ENCODE measurements at regions of chr11 and their contacts with region 1.

Region 1: DNA sequence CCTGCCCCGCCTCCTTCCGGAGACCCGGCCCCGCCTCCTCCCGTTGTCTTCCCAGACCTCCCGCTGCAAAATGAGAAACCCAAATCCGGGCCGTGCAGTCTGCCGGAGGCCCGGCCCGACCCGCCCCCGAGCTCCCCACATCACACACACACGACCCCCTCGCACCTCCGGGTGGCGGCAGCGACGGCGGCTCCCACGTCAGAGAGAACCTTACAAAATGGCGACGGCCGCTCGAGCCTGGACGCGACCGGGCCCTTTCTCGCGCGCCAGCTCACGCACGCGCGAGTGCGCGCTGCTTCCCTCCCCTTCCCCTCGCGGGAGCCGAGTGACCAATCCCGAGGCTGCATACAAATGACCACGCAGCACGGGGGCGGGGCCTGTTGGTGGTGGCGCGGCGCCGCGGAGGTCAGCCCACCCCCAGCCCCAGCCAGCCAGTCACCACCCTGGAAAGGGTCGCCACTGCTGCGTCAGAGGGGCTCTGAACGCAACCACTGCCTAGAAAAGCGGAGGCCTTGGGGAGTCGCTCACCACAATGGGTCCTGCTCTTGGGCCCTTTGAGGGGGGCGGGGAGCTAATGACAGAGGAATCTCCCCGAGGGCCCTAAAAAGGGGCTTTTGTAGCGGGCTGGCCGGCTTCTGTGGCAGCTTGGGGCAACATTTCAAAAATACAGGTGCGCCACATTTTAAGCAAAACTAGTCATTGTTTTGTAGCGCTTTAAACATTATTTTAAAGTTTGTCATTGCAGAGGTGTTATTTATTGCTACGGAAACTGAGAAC is at the start of gene RBM4B:
- DNase-seq: peak; percentile 99
- H3K4me3 ChIP-seq: peak within 1 kb of the TSS; percentile 70 to 92 (median 78)
- H3K27ac ChIP-seq: peak within 1 kb of the TSS; percentile 87 to 98 (median 92)
- H3K4me1 ChIP-seq: peaks cover 28 to 53% (median 45%) of the 10 kb centered on the region in 4 donors
- H3K27me3 ChIP-seq: no peaks in the 10 kb centered on the region
- CTCF ChIP-seq: no peak
- EP300 ChIP-seq: no peak
- POLR2A ChIP-seq: peak; percentile 48
- total RNA-seq, gene RBM4B: 10.3 to 13.2 (median 12.2) TPM

Region 2: GRCh38 chr11:66080055-66080817 is 597.6 kb before region 1 on chr11:
- intact Hi-C with region 1: no loop called
- DNase-seq: no peak
- H3K4me3 ChIP-seq: no peak overlapping the region
- H3K27ac ChIP-seq: peak overlapping the region; percentile 40 to 58 (median 48)
- H3K4me1 ChIP-seq: peaks cover 52 to 71% (median 58%) of the 10 kb centered on the region in 4 donors
- H3K27me3 ChIP-seq: no peaks in the 10 kb centered on the region
- CTCF ChIP-seq: no peak
- EP300 ChIP-seq: no peak
- POLR2A ChIP-seq: no peak

Region 3: GRCh38 chr11:66407651-66408050 is 270.1 kb before region 1 on chr11:
- intact Hi-C with region 1: no loop called
- DNase-seq: no peak
- H3K4me3 ChIP-seq: no peak overlapping the region
- H3K27ac ChIP-seq: no peak overlapping the region
- H3K4me1 ChIP-seq: peaks cover 6 to 46% (median 41%) of the 10 kb centered on the region in 4 donors
- H3K27me3 ChIP-seq: peaks cover 0 to 6% (median 0%) of the 10 kb centered on the region in 4 donors
- CTCF ChIP-seq: no peak
- EP300 ChIP-seq: no peak
- POLR2A ChIP-seq: no peak

Region 4: DNA sequence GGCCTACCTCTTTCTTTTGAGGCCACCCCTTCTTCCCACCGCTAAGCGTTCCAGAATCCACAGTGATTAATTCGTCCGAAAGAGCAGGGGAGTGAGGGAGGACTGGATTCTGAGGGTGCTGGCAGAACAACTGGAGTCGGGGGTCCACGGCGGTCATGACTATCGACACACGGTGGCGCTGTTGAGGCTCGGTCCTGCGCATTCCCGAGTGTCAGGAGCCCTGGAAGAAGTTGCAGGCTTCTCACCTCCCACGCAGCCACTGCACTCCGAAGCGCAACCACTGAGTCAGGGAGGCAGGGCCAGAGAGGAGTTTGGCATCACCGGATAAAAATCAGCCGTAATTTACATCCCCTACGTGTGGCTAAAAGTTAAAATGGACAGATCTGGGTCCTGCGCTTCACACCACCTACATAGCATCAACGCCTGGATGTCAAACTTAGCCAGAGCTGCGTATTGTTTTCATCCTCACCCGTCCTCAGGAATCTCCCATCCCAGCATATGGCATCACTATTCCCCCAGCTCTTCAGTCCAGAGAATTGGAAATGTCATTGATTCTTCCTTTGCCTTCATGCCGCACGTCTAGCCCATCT is 98.7 kb before region 1 on chr11:
- intact Hi-C with region 1: loop called (anchors 1 kb)
- DNase-seq: peak; percentile 95
- H3K4me3 ChIP-seq: no peak overlapping the region
- H3K27ac ChIP-seq: no peak overlapping the region
- H3K4me1 ChIP-seq: peaks cover 0 to 7% (median 6%) of the 10 kb centered on the region in 4 donors
- H3K27me3 ChIP-seq: no peaks in the 10 kb centered on the region
- CTCF ChIP-seq: peak; percentile 85 to 87 (median 86)
- EP300 ChIP-seq: no peak
- POLR2A ChIP-seq: no peak

Region 5: DNA sequence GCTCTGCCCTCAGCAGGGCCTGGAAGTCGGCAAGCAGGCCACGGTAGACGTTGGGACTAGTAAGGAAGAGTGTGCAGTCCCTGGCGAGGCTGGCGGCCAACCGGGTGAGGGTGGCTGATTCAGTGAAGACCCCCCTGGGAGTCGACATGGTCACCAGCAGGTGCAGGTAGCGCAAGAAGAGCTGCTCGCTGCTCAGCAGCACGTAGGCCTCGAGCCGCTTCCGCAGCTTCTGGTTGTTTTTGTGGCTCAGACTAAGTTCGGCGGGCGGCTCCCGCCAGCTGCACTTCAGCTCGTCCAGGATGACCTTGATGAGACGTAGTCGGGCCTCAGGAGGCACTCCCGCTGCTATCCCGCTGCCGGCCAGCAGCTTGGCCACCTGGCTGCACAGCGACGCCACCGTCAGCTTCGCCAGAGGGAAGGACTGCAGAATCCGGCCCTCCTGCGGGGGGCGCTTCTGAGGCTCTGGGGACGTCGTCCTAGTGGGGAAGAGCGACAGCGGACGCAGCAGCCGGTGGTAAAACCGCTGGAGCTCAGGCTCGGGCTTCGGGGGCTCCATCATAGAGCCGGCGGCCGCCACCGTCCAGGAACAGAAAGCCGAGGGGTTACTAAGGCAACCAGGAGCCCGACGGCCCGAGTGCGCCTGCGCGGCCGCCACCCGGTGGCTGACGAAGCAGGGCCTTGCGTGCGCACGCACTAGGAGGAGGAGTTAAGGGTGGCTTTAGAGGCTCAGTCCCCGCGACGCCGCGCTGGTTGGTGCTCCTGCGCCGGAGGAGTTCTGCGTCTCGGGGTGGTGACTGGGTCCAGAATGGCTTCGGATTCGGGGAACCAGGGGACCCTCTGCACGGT is 85.1 kb before region 1 on chr11 and contains the starts of genes CCDC87 and CCS:
- intact Hi-C with region 1: loop called (anchors 5 kb)
- DNase-seq: peak; percentile 99
- H3K4me3 ChIP-seq: peak within 1 kb of the TSS; percentile 60 to 78 (median 68)
- H3K27ac ChIP-seq: peak within 1 kb of the TSS; percentile 78 to 86 (median 80)
- H3K4me1 ChIP-seq: peaks cover 26 to 52% (median 39%) of the 10 kb centered on the region in 4 donors
- H3K27me3 ChIP-seq: no peaks in the 10 kb centered on the region
- CTCF ChIP-seq: peak; percentile 70 to 77 (median 74)
- EP300 ChIP-seq: no peak
- POLR2A ChIP-seq: peak; percentile 74
- total RNA-seq, gene CCDC87: 0.17 to 0.83 (median 0.46) TPM
- total RNA-seq, gene CCS: 27.8 to 50.7 (median 34.8) TPM

Region 6: GRCh38 chr11:66616379-66617154 is 61.2 kb before region 1 on chr11 and contains the start of gene RBM14:
- intact Hi-C with region 1: no loop called
- DNase-seq: peak; percentile 100
- H3K4me3 ChIP-seq: peak within 1 kb of the TSS; percentile 71 to 98 (median 80)
- H3K27ac ChIP-seq: peak within 1 kb of the TSS; percentile 92 to 99 (median 99)
- H3K4me1 ChIP-seq: peaks cover 38 to 53% (median 49%) of the 10 kb centered on the region in 4 donors
- H3K27me3 ChIP-seq: no peaks in the 10 kb centered on the region
- CTCF ChIP-seq: no peak
- EP300 ChIP-seq: no peak
- POLR2A ChIP-seq: peak; percentile 99
- total RNA-seq, gene RBM14: 30.5 to 41.7 (median 34.9) TPM